ENCODE measurements at regions of chr17 and their contacts with region 1.

Region 1: DNA sequence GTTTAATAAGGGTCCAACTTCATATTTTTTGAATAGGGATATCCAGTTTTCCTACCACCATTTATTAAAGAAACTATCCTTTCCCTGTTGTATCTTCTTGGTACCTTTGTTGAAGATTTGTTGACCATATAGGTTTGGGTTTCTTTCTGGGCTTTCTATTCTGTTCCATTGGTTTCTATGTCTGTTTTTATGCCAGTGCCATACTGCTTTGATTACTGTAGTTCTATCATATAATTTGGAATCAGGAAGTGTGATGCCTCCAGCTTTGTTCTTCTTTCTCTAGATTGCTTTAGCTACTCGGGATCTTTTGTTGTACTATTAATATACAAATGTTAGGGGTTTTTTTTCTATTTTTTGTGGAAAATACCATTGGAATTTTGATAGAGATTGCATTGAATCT is 46.6 kb downstream of the PPM1E start:
- DNase-seq: no peak
- ATAC-seq: no peak
- H3K4me3 ChIP-seq: no peak overlapping the region
- H3K27ac ChIP-seq: no peak overlapping the region
- H3K4me1 ChIP-seq: no peaks in the 10 kb centered on the region
- H3K27me3 ChIP-seq: peaks cover 21% of the 10 kb centered on the region; the same call in 1 of the 2 replicates
- CTCF ChIP-seq: no peak

Region 2: DNA sequence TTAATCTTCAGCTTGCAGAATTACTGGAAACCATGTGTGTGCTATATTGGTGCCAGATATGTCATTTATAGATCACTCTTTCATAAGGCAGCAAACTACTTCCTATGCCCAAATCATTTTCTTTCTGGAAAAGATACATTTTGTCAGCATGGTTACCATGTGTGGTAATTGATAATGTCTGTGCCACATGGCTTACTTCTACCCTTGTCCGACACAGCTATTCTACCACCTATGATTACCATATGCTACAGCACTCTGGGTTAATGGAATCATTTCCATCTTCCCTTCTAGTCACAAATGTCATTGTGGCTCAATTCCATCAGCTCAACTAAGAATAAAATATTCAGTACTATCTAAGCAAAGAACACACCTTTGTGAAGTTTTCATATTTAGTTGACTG is 54.5 kb before region 1 on chr17:
- CTCF ChIA-PET with region 1: no interaction called
- POLR2A ChIA-PET with region 1: interaction called, 15 read pairs
- intact Hi-C with region 1: no loop called
- DNase-seq: no peak
- ATAC-seq: no peak
- H3K4me3 ChIP-seq: no peak overlapping the region
- H3K27ac ChIP-seq: no peak overlapping the region
- H3K4me1 ChIP-seq: no peaks in the 10 kb centered on the region
- H3K27me3 ChIP-seq: peaks cover 6% of the 10 kb centered on the region; the same call in 1 of the 2 replicates
- CTCF ChIP-seq: no peak

Region 3: DNA sequence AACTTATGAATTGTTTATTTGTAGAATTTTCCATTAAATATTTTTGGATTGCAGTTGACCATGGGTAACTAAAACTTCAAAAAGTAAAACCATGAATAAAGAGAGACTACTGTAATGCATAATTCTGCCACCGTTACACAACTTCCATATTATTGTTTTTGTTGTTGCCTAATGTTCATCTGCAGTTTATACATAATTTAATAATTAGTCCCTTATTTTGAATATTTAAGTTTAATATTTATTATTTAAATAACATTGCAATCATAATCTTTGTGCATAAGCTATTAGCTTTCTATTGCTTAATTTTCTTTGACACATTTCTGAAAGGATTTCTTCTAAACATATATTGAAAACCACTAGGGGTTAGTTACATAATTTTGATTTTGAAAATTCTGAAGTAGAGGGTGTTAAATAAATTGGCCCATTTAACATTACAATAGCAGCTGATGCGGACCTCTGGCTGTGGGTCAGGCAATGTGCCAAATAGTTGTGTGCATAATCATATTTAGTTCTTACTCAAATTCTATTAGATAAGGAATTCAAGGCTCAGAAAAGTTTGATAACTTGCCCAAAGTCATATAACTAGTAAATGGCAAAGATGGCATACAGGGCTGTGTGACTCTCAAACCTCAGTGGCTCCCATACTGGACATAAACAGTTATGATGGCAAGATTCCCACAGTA is 15.5 kb before region 1 on chr17:
- CTCF ChIA-PET with region 1: no interaction called
- POLR2A ChIA-PET with region 1: no interaction called
- intact Hi-C with region 1: no loop called
- DNase-seq: peak; percentile 56
- ATAC-seq: peak; percentile 9; the same call in 1 of the 2 replicates
- H3K4me3 ChIP-seq: no peak overlapping the region
- H3K27ac ChIP-seq: no peak overlapping the region
- H3K4me1 ChIP-seq: peaks cover 4% of the 10 kb centered on the region
- H3K27me3 ChIP-seq: peaks cover 31% of the 10 kb centered on the region
- CTCF ChIP-seq: no peak

Region 4: DNA sequence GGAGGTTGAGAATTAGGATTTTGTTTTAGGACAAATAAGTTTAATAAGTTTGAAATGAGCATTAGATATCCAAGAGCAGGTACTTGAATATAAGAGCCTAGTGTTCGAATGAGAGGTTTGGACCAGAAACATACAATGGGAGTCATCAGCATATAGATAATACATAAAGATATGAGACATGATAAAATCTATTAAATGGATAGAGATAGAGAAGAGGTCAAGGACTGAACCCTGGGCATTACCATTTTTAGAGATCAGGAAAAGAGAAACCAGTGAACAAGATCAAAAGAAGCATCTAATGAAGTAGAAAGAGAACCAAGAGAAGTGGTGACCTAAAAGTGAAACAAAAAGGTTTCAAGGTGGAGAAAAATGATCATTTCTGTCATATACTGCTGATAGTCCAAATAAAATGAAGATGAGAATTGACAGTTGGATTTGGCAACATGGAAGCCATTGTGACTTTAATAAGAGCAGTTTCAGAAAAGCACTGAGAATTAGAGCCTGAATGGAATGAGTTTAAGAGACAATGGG is 118.5 kb after region 1 on chr17:
- CTCF ChIA-PET with region 1: no interaction called
- POLR2A ChIA-PET with region 1: no interaction called
- intact Hi-C with region 1: no loop called
- DNase-seq: no peak
- ATAC-seq: no peak
- H3K4me3 ChIP-seq: no peak overlapping the region
- H3K27ac ChIP-seq: no peak overlapping the region
- H3K4me1 ChIP-seq: no peaks in the 10 kb centered on the region
- H3K27me3 ChIP-seq: peaks cover 41% of the 10 kb centered on the region
- CTCF ChIP-seq: no peak

Measured in PC-3 (cell line).